ENCODE measurements at regions of chr3 and their contacts with region 1.

Region 1: GRCh38 chr3:190424478-190425439 is 24.9 kb downstream of the TMEM207 start:
- DNase-seq: peak; percentile 75 to 76
- H3K4me3 ChIP-seq: no peak overlapping the region
- H3K4me3 Mint-ChIP-seq: no peak overlapping the region
- H3K27ac Mint-ChIP-seq: no peak overlapping the region
- H3K4me1 ChIP-seq: no peaks in the 10 kb centered on the region
- H3K4me1 Mint-ChIP-seq: no peaks in the 10 kb centered on the region
- H3K27me3 ChIP-seq: no peaks in the 10 kb centered on the region
- H3K27me3 Mint-ChIP-seq: peaks cover 2% of the 10 kb centered on the region
- CTCF ChIP-seq: peak; percentile 57 to 66

Region 2: DNA sequence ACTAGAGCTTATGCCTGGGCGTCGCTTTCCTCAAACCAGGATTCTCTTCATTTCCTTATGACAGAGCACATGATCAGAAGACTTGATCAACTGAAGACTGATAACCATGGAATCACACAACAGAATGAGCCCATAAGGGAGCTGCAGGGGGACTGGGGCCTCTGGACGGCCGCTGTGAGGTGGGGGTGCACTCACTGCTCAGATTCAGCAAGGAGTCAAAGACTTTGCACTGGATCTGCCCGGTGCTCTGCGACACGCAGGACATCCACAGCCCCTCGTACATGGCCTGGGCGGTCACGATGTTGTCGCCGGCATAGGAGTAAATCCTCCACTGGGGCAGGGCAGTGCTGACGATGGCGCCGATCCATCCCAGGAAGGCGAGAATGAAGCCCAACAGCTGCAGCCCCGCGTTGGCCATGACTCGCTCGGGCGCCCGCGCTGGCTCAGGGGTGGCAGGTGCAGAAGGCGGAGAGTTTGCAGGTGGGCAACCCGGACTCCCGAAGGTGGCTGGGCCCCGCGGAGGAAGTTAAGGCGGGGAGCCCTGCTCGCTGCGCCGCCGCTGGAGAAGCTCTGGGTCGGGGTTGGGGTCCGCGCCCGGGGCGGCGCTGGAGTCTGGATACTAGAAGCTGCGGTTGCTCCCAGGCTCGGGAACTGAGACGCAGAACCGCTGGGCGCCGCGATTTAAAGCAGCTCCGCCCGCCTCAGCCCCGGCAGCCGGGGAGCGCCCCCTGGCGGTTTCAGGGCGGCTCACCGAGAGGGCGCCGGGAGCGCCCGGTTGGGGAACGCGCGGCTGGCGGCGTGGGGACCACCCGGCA is 102.8 kb before region 1 on chr3 and contains the start of gene CLDN1:
- CTCF ChIA-PET with region 1: interaction called, 3 read pairs
- POLR2A ChIA-PET with region 1: no interaction called
- intact Hi-C with region 1: loop called (anchors 5 kb)
- DNase-seq: peak; percentile 83 to 92
- H3K4me3 ChIP-seq: peak within 1 kb of the TSS; percentile 66
- H3K4me3 Mint-ChIP-seq: peak within 1 kb of the TSS; percentile 81
- H3K27ac Mint-ChIP-seq: peak within 1 kb of the TSS; percentile 56
- H3K4me1 ChIP-seq: peaks cover 9% of the 10 kb centered on the region
- H3K4me1 Mint-ChIP-seq: peaks cover 29% of the 10 kb centered on the region
- H3K27me3 ChIP-seq: no peaks in the 10 kb centered on the region
- H3K27me3 Mint-ChIP-seq: no peaks in the 10 kb centered on the region
- CTCF ChIP-seq: peak; percentile 92 to 96
- total RNA-seq, gene CLDN1: 38.9 and 39.3 TPM in 2 replicates

Region 3: GRCh38 chr3:190596349-190597285 is 171.9 kb after region 1 on chr3:
- CTCF ChIA-PET with region 1: no interaction called
- POLR2A ChIA-PET with region 1: no interaction called
- intact Hi-C with region 1: no loop called
- DNase-seq: no peak
- H3K4me3 ChIP-seq: no peak overlapping the region
- H3K4me3 Mint-ChIP-seq: no peak overlapping the region
- H3K27ac Mint-ChIP-seq: no peak overlapping the region
- H3K4me1 ChIP-seq: peaks cover 7% of the 10 kb centered on the region; the same call in 1 of the 2 replicates
- H3K4me1 Mint-ChIP-seq: peaks cover 10% of the 10 kb centered on the region
- H3K27me3 ChIP-seq: no peaks in the 10 kb centered on the region
- H3K27me3 Mint-ChIP-seq: no peaks in the 10 kb centered on the region
- CTCF ChIP-seq: no peak